Heart right ventricle (tissue), 16 donors: ENCODE measurements at regions of chr16 and their contacts with region 1.

Region 1: GRCh38 chr16:88448461-88449266 is 4.4 kb upstream of the ZFPM1 start:
- DNase-seq: no peak
- ATAC-seq: no peak
- H3K4me3 ChIP-seq: no peak overlapping the region
- H3K27ac ChIP-seq: no peak overlapping the region
- H3K4me1 ChIP-seq: peaks cover under 1 to 27% (median 9%) of the 10 kb centered on the region in 9 donors
- H3K27me3 ChIP-seq: peaks cover 0 to 4% (median 0%) of the 10 kb centered on the region in 7 donors
- CTCF ChIP-seq: no peak

Region 2: GRCh38 chr16:88561485-88562369 is 113.1 kb after region 1 on chr16:
- intact Hi-C with region 1: loop called in 8 of 10 experiments (anchors 2 to 10 kb)
- DNase-seq: peak; percentile 34 to 36
- ATAC-seq: peak; percentile 18 to 62 (median 42)
- H3K4me3 ChIP-seq: peak overlapping the region in 6 of 10 donors; percentile 14 to 38 (median 34)
- H3K27ac ChIP-seq: no peak overlapping the region
- H3K4me1 ChIP-seq: peaks cover 0 to 16% (median 8%) of the 10 kb centered on the region in 9 donors
- H3K27me3 ChIP-seq: peaks cover 0 to 20% (median 15%) of the 10 kb centered on the region in 7 donors
- CTCF ChIP-seq: peak; percentile 49 to 72 (median 63)